ENCODE measurements at regions of chr9 and their contacts with region 1.

Region 1: GRCh38 chr9:129884220-129885017 is 49.2 kb downstream of the USP20 start:
- DNase-seq: peak; percentile 94
- H3K4me3 Mint-ChIP-seq: peak overlapping the region; percentile 94
- H3K27ac Mint-ChIP-seq: peak overlapping the region; percentile 100
- H3K4me1 Mint-ChIP-seq: peaks cover 55% of the 10 kb centered on the region
- H3K27me3 Mint-ChIP-seq: peaks cover 2% of the 10 kb centered on the region

Region 2: DNA sequence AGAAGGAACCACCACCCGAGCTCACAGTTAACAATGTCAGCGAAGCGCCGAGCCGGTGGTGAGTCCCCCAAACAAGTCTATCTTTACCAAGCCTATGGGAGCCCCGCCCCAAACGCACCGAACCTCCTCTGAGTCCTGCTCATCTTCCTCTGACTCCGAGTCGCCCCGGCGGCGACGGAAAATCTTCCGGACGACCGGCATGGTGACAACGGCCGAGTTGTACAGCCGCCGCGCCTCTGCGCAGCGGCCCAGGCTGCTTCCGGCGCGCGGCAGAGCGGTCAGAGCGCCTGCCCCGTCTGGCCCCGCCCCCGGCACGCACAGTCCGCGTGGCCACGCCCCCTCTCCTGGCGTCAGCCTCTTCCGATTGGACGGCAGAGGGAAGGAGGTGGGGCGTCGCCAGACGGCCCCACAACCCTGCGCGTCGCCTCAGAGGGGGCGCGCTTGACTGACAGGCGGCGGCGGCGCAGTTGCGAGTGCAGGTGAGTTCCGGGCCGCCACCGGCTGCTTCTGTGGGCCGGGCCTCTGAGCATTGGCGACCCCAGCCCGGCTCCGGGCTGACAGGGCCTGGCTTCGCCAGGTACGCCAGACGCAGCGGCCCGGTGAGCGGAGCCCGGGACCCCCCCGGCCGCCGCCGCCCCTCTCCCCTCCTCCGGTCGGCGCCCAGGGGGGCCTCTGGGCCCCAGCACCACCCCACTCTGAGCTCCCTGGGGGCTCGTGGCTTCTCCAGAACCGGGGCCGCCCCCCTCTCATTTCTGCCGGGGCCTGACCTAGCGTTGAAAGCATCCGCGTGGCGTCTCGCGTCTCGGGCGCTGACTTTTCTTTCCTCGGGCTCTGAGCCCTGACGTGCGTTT is 49.2 kb before region 1 on chr9 and contains the starts of genes C9orf78 and USP20:
- intact Hi-C with region 1: loop called (anchors 1 kb)
- DNase-seq: peak; percentile 98
- H3K4me3 Mint-ChIP-seq: peak within 1 kb of the TSS; percentile 97
- H3K27ac Mint-ChIP-seq: peak within 1 kb of the TSS; percentile 99
- H3K4me1 Mint-ChIP-seq: peaks cover 50% of the 10 kb centered on the region
- H3K27me3 Mint-ChIP-seq: no peaks in the 10 kb centered on the region
- total RNA-seq, gene C9orf78: 64.0 and 67.4 TPM in 2 replicates
- total RNA-seq, gene USP20: 47.9 and 50.2 TPM in 2 replicates

Region 3: DNA sequence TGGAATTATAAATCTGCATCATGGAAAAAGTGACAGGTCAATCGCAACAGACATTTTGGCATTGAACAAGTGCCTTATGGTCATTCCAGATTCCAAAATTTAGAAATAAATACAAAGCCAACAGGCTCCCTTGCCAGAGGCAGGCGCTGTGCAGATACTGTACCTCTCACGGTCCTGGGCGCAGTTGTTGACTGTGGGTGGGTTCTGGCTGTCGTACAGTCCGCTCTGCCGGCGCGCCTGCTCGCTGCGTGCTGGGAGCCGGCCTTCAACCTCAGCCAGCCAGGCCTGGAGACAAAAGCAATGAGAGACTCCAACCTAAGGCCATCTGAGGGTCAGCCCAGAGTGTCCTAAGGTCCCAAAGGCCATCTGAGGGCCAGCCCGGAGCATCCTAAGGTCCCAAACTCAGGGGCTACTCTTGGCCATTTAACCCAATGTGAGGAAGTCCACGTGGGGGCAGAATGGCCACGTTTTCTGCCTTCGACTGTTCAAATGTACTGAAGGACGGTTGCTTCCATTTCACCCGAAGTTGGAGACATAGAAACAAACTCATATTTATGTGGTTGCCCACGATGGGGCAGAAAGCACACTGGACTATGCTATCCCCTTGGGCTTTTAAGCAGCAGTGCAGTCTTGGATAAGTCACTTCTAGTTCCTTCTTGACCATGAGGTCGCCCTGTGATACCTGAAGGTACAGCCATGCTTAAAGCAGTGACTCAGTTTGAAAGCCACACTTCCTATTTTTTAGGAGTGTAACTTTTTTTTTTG is 16.0 kb after region 1 on chr9:
- intact Hi-C with region 1: no loop called
- DNase-seq: no peak
- H3K4me3 Mint-ChIP-seq: no peak overlapping the region
- H3K27ac Mint-ChIP-seq: peak overlapping the region; percentile 20
- H3K4me1 Mint-ChIP-seq: peaks cover 39% of the 10 kb centered on the region
- H3K27me3 Mint-ChIP-seq: no peaks in the 10 kb centered on the region

Region 4: GRCh38 chr9:129932303-129933151 is 48.1 kb after region 1 on chr9:
- intact Hi-C with region 1: loop called (anchors 1 kb)
- DNase-seq: no peak
- H3K4me3 Mint-ChIP-seq: peak overlapping the region; percentile 66
- H3K27ac Mint-ChIP-seq: peak overlapping the region; percentile 92
- H3K4me1 Mint-ChIP-seq: peaks cover 57% of the 10 kb centered on the region
- H3K27me3 Mint-ChIP-seq: no peaks in the 10 kb centered on the region

Region 5: GRCh38 chr9:129988607-129989361 is 104.4 kb after region 1 on chr9:
- intact Hi-C with region 1: loop called (anchors 1 kb)
- DNase-seq: no peak
- H3K4me3 Mint-ChIP-seq: peak overlapping the region; percentile 8
- H3K27ac Mint-ChIP-seq: peak overlapping the region; percentile 88
- H3K4me1 Mint-ChIP-seq: peaks cover 55% of the 10 kb centered on the region
- H3K27me3 Mint-ChIP-seq: no peaks in the 10 kb centered on the region

Region 6: GRCh38 chr9:130053504-130054324 is 169.3 kb after region 1 on chr9 and contains the start of gene GPR107:
- intact Hi-C with region 1: loop called (anchors 2 kb)
- DNase-seq: peak; percentile 77
- H3K4me3 Mint-ChIP-seq: peak within 1 kb of the TSS; percentile 96
- H3K27ac Mint-ChIP-seq: peak within 1 kb of the TSS; percentile 92
- H3K4me1 Mint-ChIP-seq: peaks cover 34% of the 10 kb centered on the region
- H3K27me3 Mint-ChIP-seq: no peaks in the 10 kb centered on the region
- total RNA-seq, gene GPR107: 23.1 and 24.9 TPM in 2 replicates

Region 7: GRCh38 chr9:131270171-131271015 is 1386.0 kb after region 1 on chr9:
- intact Hi-C with region 1: loop called (anchors 5 kb)
- DNase-seq: no peak
- H3K4me3 Mint-ChIP-seq: peak overlapping the region; percentile 100
- H3K27ac Mint-ChIP-seq: peak overlapping the region; percentile 86
- H3K4me1 Mint-ChIP-seq: peaks cover 75% of the 10 kb centered on the region
- H3K27me3 Mint-ChIP-seq: no peaks in the 10 kb centered on the region